Activated CD8-positive, alpha-beta T cell treated with anti-CD3 and anti-CD28 coated beads for 36 hours (primary cell): ENCODE measurements at regions of chr6 and their contacts with region 1.

Region 1: DNA sequence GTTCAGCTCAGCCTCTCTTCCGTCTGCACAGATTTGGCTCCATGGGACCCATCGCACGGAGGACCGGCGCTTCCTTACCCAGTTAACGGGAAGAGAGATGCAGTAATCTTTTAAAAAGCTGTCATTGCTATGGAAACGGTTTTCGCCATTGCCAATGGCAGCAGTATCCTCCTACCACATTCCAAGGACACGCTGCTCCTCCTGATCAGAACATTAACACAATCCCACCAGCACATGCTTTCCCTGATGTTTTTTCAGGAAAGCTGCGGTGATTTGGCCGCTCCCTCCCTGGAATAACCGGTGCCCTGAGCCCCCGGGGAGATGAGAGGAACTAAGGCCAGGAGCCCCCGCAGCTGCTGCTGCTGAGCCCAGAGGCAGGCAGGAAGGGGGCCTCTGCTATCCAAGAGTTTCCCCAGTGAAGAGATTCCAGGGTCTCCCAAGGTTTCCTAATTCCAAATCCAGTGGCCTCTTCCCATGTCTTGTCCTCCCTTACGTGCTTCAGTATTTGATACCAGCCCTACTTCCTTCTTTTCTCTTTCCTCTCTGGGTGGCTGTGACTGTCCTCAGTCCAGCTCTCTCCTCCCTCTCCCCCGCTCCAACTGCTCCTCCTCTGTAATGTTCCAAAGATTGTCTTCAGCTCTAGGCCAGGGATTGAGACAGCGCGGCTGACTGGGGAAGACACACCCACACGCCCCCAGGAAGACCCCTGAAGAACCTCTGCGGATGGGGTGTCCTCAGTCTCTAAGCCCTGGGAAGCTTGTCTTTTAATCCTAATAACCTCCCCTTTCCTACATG is 2.6 kb downstream of the BNIP5 start:
- DNase-seq: no peak
- ATAC-seq: no peak
- H3K4me3 Mint-ChIP-seq: no peak overlapping the region
- H3K27ac Mint-ChIP-seq: no peak overlapping the region
- H3K4me1 Mint-ChIP-seq: peaks cover 12% of the 10 kb centered on the region
- H3K27me3 Mint-ChIP-seq: peaks cover 20% of the 10 kb centered on the region
- CTCF ChIP-seq: no peak

Region 2: DNA sequence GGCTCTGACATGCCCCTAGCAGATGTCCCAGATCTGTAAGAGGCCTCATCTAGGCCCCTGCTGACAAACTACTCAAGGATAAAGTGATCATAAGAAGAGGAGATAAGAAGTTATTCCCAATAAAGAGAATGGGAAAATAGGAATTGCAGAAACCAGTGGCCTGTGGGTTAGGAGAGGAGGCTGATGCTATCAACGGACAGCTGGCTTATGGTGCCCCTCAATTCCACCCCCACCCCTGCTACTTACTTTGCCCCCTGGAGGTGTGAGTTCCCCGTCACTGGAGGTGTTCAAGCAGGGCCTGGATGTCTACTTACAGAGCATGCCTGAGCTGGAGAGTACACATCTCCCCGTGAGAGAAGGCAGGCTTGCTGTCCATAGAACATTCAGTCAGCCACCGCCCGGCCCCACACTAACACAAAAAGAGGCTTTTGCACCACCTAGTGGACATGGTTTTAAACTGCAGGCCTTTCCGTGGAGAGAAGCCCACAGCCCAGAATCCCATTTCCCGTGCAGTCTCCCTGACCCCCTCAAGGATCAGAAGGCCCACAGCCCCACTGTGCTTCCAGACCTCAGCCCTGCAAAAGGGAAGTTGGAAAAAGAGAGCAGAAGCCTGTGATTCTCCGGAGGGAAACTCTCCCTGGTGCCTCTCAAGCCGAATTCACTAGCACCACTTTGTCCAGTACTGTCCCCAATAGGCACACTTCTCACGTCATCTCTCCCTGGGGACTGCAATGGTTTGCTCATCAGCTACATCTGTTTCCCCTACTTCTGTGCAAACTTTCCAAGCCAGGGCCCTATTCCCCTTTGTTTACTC is 26.3 kb after region 1 on chr6:
- CTCF ChIA-PET with region 1: interaction called, 136 read pairs
- POLR2A ChIA-PET with region 1: interaction called, 3 read pairs
- intact Hi-C with region 1: no loop called
- DNase-seq: peak; percentile 84
- ATAC-seq: peak; percentile 93
- H3K4me3 Mint-ChIP-seq: no peak overlapping the region
- H3K27ac Mint-ChIP-seq: no peak overlapping the region
- H3K4me1 Mint-ChIP-seq: peaks cover 12% of the 10 kb centered on the region
- H3K27me3 Mint-ChIP-seq: no peaks in the 10 kb centered on the region
- CTCF ChIP-seq: peak; percentile 79

Region 3: DNA sequence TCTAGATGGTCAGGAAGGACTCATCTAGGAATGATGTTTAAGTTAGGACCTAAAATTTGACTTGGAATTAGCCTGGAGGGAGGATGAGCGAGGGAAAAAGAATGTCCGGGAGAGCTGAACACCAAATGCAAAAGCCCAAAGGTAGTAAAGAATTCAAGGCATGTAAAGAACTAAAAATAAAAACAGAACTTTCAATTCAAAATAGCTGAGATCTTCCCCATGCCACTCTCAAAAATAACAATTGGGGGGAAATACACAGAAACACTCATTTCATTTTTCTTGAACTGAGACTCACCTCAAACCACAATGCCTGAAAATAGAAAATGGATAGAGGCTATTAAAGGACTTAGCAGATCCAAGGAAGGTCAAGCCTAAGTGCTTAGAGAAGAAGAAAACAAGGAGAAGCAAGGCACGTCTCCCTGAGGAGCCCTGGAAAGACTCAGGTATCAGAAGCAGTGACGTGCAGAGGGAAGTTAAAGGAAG is 98.1 kb after region 1 on chr6:
- CTCF ChIA-PET with region 1: no interaction called
- POLR2A ChIA-PET with region 1: no interaction called
- intact Hi-C with region 1: no loop called
- DNase-seq: no peak
- ATAC-seq: no peak
- H3K4me3 Mint-ChIP-seq: no peak overlapping the region
- H3K27ac Mint-ChIP-seq: no peak overlapping the region
- H3K4me1 Mint-ChIP-seq: peaks cover 5% of the 10 kb centered on the region
- H3K27me3 Mint-ChIP-seq: no peaks in the 10 kb centered on the region
- CTCF ChIP-seq: no peak